ENCODE measurements at regions of chr2 and their contacts with region 1.

Region 1: GRCh38 chr2:212249451-212249850 is 289.2 kb downstream of the ERBB4 start:
- DNase-seq: peak; percentile 46
- H3K4me3 ChIP-seq: no peak overlapping the region
- H3K27ac ChIP-seq: no peak overlapping the region
- H3K4me1 ChIP-seq: no peaks in the 10 kb centered on the region
- H3K27me3 ChIP-seq: no peaks in the 10 kb centered on the region
- CTCF ChIP-seq: peak; percentile 23 to 41
- POLR2A ChIP-seq: no peak

Region 2: GRCh38 chr2:211423030-211423429 is 826.4 kb before region 1 on chr2:
- CTCF ChIA-PET with region 1: no interaction called
- POLR2A ChIA-PET with region 1: no interaction called
- dilution Hi-C with region 1: no loop called
- intact Hi-C with region 1: no loop called
- DNase-seq: no peak
- H3K4me3 ChIP-seq: no peak overlapping the region
- H3K27ac ChIP-seq: no peak overlapping the region
- H3K4me1 ChIP-seq: peaks cover 8% of the 10 kb centered on the region
- H3K27me3 ChIP-seq: no peaks in the 10 kb centered on the region
- CTCF ChIP-seq: no peak
- POLR2A ChIP-seq: no peak

Region 3: DNA sequence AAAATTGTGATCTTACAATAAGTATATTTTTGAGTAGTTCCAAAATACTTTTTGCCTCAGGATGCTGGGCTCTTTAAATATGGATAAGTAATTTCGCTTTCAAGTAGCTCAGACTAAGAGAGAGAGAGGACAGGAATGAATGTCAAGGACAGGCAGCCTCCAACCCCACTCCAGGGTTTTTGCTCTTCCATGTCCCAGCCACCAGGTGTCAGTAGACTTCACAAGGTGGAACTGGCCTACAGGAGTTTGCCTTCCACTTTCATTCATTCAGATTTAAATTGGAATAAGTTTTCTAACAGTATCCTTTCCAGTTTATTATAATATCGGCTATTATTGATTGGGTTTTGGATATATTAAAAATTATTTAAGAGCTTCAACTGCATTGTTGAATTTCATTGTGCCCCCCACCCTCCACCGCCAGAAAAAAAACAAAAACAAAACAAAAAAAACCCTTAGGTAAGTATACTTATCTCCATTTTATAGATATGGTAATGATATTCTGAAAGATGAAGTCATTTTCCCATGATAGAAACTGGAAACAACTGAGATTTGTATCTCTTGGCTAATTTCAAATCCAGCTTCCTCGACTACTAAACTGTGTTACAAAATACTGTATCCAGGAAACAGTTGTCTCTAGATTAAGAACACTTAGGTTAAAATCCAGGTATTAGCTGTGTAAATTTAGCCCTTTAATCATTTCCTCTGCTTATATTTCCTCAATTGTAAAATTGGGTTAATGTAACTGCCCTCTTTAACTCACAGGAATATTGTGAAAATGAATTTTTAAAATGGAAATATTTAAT is 504.0 kb before region 1 on chr2:
- CTCF ChIA-PET with region 1: interaction called, 84 read pairs
- POLR2A ChIA-PET with region 1: no interaction called
- dilution Hi-C with region 1: no loop called
- intact Hi-C with region 1: loop called (anchors 1 kb)
- DNase-seq: peak; percentile 56
- H3K4me3 ChIP-seq: no peak overlapping the region
- H3K27ac ChIP-seq: no peak overlapping the region
- H3K4me1 ChIP-seq: peaks cover 3% of the 10 kb centered on the region
- H3K27me3 ChIP-seq: no peaks in the 10 kb centered on the region
- CTCF ChIP-seq: peak; percentile 80 to 82
- POLR2A ChIP-seq: no peak

Region 4: DNA sequence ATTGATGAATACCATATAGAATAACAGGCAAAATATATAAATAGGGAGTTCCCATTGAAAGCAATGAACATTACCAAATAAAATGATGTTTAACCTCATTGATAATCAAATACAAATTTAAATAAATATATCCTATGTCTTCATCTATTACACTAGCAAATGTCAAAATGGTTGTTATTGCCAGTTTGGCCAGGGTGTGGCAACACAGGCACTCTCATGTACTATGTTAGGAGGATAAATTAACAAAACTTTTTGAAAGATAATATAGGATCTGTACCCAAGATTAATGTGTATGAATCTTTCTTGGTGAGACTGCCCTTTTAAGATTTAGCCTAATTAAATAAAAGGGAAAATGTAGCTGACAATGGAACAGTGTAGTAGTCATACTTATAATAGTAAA is 370.1 kb before region 1 on chr2:
- CTCF ChIA-PET with region 1: interaction called, 101 read pairs
- POLR2A ChIA-PET with region 1: no interaction called
- dilution Hi-C with region 1: no loop called
- intact Hi-C with region 1: loop called (anchors 1 kb)
- DNase-seq: peak; percentile 47
- H3K4me3 ChIP-seq: no peak overlapping the region
- H3K27ac ChIP-seq: no peak overlapping the region
- H3K4me1 ChIP-seq: peaks cover 7% of the 10 kb centered on the region
- H3K27me3 ChIP-seq: no peaks in the 10 kb centered on the region
- CTCF ChIP-seq: peak in 1 of 2 donors; percentile 28
- POLR2A ChIP-seq: no peak

Region 5: DNA sequence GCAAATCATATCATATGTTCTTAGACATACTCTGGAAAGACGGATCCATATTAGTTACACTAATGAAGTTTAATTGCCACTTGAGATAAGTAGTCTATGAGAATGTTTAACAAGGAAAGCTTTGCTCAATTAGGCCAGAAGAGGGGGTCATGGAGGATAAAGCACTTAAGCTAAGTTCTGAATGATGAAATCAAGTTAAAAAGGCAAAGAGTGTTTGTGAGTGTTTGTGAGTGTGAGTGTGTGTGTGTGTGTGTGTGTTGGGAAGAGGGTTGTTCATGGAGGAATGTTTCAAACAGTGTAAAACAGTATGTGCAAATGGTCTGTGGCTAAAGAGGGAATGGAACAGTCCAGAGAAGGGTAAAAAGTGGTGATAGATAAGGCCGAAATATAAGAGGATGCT is 71.7 kb before region 1 on chr2:
- CTCF ChIA-PET with region 1: interaction called, 12 read pairs
- POLR2A ChIA-PET with region 1: no interaction called
- dilution Hi-C with region 1: no loop called
- intact Hi-C with region 1: no loop called
- DNase-seq: peak; percentile 13
- H3K4me3 ChIP-seq: no peak overlapping the region
- H3K27ac ChIP-seq: no peak overlapping the region
- H3K4me1 ChIP-seq: peaks cover 15% of the 10 kb centered on the region
- H3K27me3 ChIP-seq: no peaks in the 10 kb centered on the region
- CTCF ChIP-seq: no peak
- POLR2A ChIP-seq: no peak

Region 6: DNA sequence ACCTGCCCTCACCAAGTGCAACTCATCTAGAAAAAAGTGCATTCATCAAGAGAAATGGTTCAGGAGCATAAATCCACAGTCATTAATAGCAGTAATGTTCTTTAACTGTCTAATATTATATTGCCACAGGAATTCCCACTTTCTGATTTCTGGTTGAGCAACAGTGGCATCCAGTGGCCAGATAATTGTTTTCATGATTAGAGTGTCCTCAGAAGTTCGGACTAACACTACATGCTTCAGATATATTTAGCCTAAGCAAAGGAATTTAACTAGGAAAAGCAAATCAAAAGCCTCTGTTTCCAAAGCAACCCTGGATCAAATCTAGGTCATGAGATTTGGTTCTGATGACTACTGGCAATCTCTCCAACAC is 299.0 kb after region 1 on chr2:
- CTCF ChIA-PET with region 1: interaction called, 3 read pairs
- POLR2A ChIA-PET with region 1: no interaction called
- dilution Hi-C with region 1: no loop called
- intact Hi-C with region 1: loop called (anchors 2 kb)
- DNase-seq: peak; percentile 54
- H3K4me3 ChIP-seq: no peak overlapping the region
- H3K27ac ChIP-seq: no peak overlapping the region
- H3K4me1 ChIP-seq: no peaks in the 10 kb centered on the region
- H3K27me3 ChIP-seq: no peaks in the 10 kb centered on the region
- CTCF ChIP-seq: peak; percentile 12 to 13
- POLR2A ChIP-seq: no peak